Left cardiac atrium (tissue), 4 donors: ENCODE measurements at regions of chr2 and their contacts with region 1.

Region 1: DNA sequence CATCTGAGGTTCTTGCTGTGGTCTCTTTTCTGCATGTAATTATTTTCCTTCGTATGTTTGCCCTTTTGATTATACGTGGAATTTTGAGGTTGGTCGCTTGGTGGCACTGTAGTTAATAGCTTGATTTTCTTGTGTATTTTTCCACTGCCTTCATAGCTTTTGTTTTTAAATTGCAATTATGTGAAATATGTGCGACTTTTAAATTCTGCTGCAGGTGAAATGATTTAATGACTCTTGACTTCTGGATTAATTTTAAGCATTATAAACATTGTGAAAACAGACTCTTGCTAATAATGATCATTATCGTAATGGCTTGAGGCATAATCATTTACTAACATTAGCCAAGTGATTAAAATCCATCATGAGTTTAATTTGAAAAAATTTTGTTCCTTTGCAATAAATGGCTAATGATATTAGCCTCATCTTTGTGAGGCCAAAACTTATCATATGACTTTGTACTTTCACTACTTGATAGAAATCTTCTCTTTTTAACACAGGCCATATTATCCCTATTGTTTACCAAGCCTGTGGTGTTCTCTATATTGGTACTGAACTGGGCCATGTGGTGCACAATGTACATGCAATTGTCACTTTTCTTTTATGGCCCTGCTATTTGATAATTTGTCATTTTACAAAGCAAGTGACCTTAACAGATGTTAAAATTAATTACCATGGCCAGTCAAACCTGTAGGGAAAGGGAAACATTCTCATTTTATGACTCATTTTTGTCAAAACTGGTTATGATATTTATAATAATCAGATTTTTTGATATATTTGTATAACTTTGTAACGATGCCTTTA is 62.8 kb upstream of the NEUROD1 start:
- DNase-seq: peak; percentile 36
- ATAC-seq: peak; percentile 33 to 50

Region 2: DNA sequence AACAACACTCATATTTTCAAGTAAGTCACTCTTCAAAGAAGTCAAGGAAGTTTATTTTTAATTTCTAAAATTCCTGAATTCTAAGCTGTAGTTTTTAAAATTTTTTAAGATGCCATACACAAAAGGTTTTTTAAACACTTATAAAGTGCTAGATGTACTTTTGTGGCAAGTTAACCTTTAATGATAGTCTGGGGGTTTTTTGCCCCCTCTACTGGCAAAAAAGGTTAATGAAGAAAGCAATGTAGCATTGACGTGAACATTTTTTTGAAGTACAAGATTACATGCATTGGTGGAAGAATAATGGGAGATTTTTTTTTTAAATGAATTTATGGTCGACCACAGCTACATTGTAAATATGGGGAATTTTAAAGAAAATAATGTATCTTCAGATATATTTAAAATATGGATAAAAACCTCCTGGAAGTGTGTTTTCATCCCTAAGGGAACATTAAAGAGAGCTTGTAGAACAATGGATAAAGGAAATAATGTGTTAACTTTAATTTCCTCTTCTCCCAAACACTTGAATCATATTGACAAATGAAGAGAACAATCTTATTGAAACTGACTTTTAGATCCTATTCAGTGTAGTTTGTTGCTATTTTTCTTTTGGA is 161.0 kb after region 1 on chr2:
- intact Hi-C with region 1: loop called in 1 of 2 experiments (anchors 5 kb)
- DNase-seq: no peak
- ATAC-seq: no peak

Region 3: GRCh38 chr2:181953881-181954537 is 210.9 kb after region 1 on chr2:
- intact Hi-C with region 1: loop called (anchors 2 to 10 kb)
- DNase-seq: peak; percentile 54
- ATAC-seq: peak; percentile 38 to 51